B cell (primary cell): ENCODE measurements at regions of chr6 and their contacts with region 1.

Region 1: DNA sequence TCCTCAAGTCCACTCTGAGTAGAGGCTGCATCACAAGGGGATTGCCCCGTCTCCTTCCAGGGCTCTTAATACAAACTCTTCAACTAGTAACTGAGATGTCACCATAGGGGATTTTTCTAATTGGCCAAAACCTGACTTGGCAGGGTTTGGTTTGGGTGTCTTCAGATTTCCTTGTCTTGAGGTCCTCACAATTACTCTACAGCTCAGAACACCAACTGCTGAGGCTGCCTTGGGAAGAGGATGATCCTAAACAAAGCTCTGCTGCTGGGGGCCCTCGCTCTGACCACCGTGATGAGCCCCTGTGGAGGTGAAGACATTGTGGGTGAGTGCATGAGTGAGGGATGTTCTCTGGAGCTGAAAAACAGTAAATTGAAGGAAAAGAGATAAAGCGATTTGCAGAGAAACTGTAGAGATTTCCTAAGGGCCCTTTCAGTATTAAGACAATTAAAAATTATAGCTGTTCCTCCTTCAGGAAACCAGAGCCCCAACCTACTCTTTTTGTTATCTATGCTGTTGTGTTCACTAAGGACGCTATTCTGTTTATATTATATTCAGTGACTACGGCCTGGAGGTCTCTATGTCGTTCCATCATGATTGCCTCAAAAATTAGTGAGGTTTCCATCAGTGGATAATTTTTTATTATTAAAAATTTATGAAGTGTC is at the start of gene HLA-DQA1:
- DNase-seq: peak; percentile 94
- ATAC-seq: peak; percentile 89
- H3K4me3 ChIP-seq: peak within 1 kb of the TSS; percentile 49 to 100 (median 66)
- H3K4me3 Mint-ChIP-seq: peak within 1 kb of the TSS; percentile 99
- H3K27ac ChIP-seq: peak within 1 kb of the TSS; percentile 94 to 98
- H3K27ac Mint-ChIP-seq: peak within 1 kb of the TSS; percentile 99
- H3K4me1 ChIP-seq: peaks cover 44 to 52% of the 10 kb centered on the region in 2 donors
- H3K4me1 Mint-ChIP-seq: peaks cover 68% of the 10 kb centered on the region
- H3K27me3 ChIP-seq: no peaks in the 10 kb centered on the region
- H3K27me3 Mint-ChIP-seq: no peaks in the 10 kb centered on the region
- CTCF ChIP-seq: no peak
- total RNA-seq, gene HLA-DQA1: 463 and 489 TPM in 2 replicates

Region 2: DNA sequence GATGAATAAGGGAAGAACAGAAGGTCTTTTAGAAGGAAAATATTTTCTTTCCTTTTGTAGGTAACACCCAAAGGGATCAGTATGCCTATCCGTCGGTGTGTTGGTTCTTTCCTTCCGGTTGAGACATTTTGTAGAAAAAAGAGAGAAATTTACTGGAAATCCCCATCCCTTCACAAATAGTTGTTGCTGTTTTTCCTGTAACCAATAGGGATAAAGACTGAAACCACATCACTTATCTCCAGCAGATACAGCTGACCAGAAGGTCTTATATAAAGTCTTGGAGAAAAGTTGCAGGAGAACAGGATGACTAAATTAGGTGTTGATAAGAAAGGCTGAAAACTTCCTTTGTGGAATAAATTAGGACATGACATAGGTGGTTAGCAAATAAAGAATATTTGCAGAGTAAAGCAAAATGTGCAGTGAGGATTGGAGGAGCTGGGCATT is 32.9 kb before region 1 on chr6:
- CTCF ChIA-PET with region 1: interaction called, 4 read pairs
- POLR2A ChIA-PET with region 1: interaction called, 22 read pairs
- intact Hi-C with region 1: loop called (anchors 5 kb)
- DNase-seq: peak; percentile 87
- ATAC-seq: peak; percentile 74
- H3K4me3 ChIP-seq: peak overlapping the region in 4 of 5 experiments; percentile 39 to 57 (median 42)
- H3K4me3 Mint-ChIP-seq: peak overlapping the region; percentile 87
- H3K27ac ChIP-seq: peak overlapping the region; percentile 99 to 100
- H3K27ac Mint-ChIP-seq: peak overlapping the region; percentile 97
- H3K4me1 ChIP-seq: peaks cover 52 to 57% of the 10 kb centered on the region in 2 donors
- H3K4me1 Mint-ChIP-seq: peaks cover 69% of the 10 kb centered on the region
- H3K27me3 ChIP-seq: no peaks in the 10 kb centered on the region
- H3K27me3 Mint-ChIP-seq: no peaks in the 10 kb centered on the region
- CTCF ChIP-seq: no peak

Region 3: DNA sequence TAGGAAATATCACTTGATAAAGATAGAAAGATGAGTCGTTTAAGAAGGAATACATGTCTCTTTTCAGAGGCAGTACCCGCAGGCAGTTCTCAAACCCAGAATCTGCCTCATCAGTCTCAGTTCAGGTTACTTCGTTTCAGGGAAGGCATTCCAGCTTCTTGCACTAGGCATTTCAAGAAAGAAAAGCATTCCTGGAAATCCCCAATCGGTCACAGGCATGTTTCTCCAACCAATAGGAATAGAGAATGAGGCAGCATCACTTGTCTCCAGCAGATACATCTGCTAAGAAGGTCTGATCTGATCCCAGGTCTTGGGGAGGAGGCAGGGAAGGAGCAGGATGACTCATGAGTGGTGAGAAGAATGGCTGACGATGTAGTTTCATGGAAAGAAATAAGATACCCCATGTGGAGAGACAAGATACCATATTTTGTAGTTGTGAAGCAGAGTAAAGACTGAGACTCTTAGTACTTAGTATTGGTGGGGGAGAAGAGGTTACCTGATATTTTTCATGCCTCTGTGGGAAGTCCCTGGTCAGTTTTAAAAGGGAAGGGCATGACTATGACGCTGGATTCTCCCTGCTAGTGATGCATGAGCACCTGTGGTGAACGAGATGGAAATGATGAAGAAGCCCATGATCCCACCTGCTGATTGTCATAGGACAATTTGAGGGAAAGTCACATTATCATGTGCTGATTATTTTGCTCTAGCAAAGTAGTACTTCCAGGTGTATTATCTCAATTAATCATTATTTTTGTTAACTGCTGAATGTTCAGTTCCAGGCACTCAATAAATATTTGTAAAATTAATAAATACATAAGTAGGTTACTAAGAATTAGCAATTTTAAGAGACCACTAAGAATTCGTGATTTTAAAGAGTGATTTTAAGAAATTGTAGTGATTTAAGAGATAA is 27.4 kb before region 1 on chr6:
- CTCF ChIA-PET with region 1: interaction called, 4 read pairs
- POLR2A ChIA-PET with region 1: interaction called, 22 read pairs
- intact Hi-C with region 1: loop called (anchors 2 kb)
- DNase-seq: peak; percentile 99
- ATAC-seq: peak; percentile 88
- H3K4me3 ChIP-seq: peak overlapping the region in 4 of 5 experiments; percentile 25 to 41 (median 30)
- H3K4me3 Mint-ChIP-seq: no peak overlapping the region
- H3K27ac ChIP-seq: peak overlapping the region; percentile 99 to 100
- H3K27ac Mint-ChIP-seq: no peak overlapping the region
- H3K4me1 ChIP-seq: peaks cover 47 to 53% of the 10 kb centered on the region in 2 donors
- H3K4me1 Mint-ChIP-seq: peaks cover 59% of the 10 kb centered on the region
- H3K27me3 ChIP-seq: no peaks in the 10 kb centered on the region
- H3K27me3 Mint-ChIP-seq: no peaks in the 10 kb centered on the region
- CTCF ChIP-seq: no peak

Region 4: GRCh38 chr6:32659856-32660595 is 22.7 kb after region 1 on chr6:
- CTCF ChIA-PET with region 1: no interaction called
- POLR2A ChIA-PET with region 1: interaction called, 18 read pairs
- intact Hi-C with region 1: no loop called
- DNase-seq: peak; percentile 54
- ATAC-seq: peak; percentile 78
- H3K4me3 ChIP-seq: peak overlapping the region in 2 of 5 experiments; percentile 2 to 20
- H3K4me3 Mint-ChIP-seq: peak overlapping the region; percentile 89
- H3K27ac ChIP-seq: peak overlapping the region in 1 of 2 donors; percentile 57
- H3K27ac Mint-ChIP-seq: peak overlapping the region; percentile 100
- H3K4me1 ChIP-seq: peaks cover 34 to 49% of the 10 kb centered on the region in 2 donors
- H3K4me1 Mint-ChIP-seq: peaks cover 66% of the 10 kb centered on the region
- H3K27me3 ChIP-seq: no peaks in the 10 kb centered on the region
- H3K27me3 Mint-ChIP-seq: no peaks in the 10 kb centered on the region
- CTCF ChIP-seq: no peak

Region 5: GRCh38 chr6:32692019-32692418 is 54.7 kb after region 1 on chr6:
- CTCF ChIA-PET with region 1: interaction called, 12 read pairs
- POLR2A ChIA-PET with region 1: interaction called, 3 read pairs
- intact Hi-C with region 1: no loop called
- DNase-seq: peak; percentile 85
- ATAC-seq: peak; percentile 60
- H3K4me3 ChIP-seq: no peak overlapping the region
- H3K4me3 Mint-ChIP-seq: peak overlapping the region; percentile 53
- H3K27ac ChIP-seq: peak overlapping the region; percentile 68 to 95
- H3K27ac Mint-ChIP-seq: peak overlapping the region; percentile 85
- H3K4me1 ChIP-seq: peaks cover 27 to 28% of the 10 kb centered on the region in 2 donors
- H3K4me1 Mint-ChIP-seq: peaks cover 33% of the 10 kb centered on the region
- H3K27me3 ChIP-seq: no peaks in the 10 kb centered on the region
- H3K27me3 Mint-ChIP-seq: no peaks in the 10 kb centered on the region
- CTCF ChIP-seq: peak; percentile 42

Region 6: DNA sequence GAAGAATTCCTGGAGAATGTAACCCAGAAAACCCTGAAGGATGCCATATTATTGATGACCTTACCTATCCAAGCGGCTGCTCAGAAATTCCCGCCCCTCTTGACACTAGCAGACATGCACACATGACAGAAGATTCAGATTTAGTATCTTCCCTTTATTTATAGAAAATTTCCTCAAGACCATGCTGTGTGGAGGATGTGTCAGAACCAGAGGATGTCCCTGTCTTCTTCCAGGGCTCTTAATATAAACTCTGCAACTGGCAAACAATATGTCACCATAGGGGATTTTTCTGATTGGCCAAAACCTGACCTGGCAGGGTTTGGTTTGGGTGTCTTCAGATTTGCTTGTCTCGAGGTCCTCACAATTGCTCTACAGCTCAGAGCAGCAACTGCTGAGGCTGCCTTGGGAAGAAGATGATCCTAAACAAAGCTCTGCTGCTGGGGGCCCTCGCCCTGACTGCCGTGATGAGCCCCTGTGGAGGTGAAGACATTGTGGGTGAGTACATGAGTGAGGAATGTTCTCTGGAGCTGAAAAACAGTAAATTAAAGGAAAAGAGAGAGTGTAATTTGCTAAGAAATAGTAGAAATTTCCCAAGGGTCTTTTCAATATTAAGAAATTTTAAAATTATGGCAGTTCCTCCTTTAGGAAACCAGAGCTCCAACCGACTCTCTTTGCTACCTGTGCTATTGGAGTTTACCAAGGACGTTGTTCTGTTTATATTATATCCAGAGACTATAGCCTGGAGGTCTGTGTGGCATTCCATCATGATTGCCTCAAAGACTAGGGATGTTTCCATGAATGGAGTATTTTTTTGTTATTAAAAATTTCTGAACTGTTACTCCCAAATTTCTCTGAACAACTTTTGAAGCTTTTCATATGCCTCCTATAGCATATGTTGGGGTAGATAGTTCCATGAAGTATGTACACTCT is 103.9 kb after region 1 on chr6 and contains the start of gene HLA-DQA2:
- CTCF ChIA-PET with region 1: interaction called, 3 read pairs
- POLR2A ChIA-PET with region 1: interaction called, 15 read pairs
- intact Hi-C with region 1: no loop called
- DNase-seq: peak; percentile 70
- ATAC-seq: peak; percentile 99
- H3K4me3 ChIP-seq: peak within 1 kb of the TSS in 1 of 5 experiments; percentile 34
- H3K4me3 Mint-ChIP-seq: peak within 1 kb of the TSS; percentile 86
- H3K27ac ChIP-seq: peak within 1 kb of the TSS in 1 of 2 donors; percentile 68
- H3K27ac Mint-ChIP-seq: peak within 1 kb of the TSS; percentile 89
- H3K4me1 ChIP-seq: peaks cover 0 to 2% of the 10 kb centered on the region in 2 donors
- H3K4me1 Mint-ChIP-seq: peaks cover 7% of the 10 kb centered on the region
- H3K27me3 ChIP-seq: peaks cover 0 to 7% (median 3%) of the 10 kb centered on the region in 4 experiments
- H3K27me3 Mint-ChIP-seq: peaks cover 30% of the 10 kb centered on the region
- CTCF ChIP-seq: no peak
- total RNA-seq, gene HLA-DQA2: 171 and 173 TPM in 2 replicates